Activated B cell treated with CpG ODN at 0.5 μM for 24 hours (primary cell): ENCODE measurements at regions of chrX and their contacts with region 1.

Region 1: DNA sequence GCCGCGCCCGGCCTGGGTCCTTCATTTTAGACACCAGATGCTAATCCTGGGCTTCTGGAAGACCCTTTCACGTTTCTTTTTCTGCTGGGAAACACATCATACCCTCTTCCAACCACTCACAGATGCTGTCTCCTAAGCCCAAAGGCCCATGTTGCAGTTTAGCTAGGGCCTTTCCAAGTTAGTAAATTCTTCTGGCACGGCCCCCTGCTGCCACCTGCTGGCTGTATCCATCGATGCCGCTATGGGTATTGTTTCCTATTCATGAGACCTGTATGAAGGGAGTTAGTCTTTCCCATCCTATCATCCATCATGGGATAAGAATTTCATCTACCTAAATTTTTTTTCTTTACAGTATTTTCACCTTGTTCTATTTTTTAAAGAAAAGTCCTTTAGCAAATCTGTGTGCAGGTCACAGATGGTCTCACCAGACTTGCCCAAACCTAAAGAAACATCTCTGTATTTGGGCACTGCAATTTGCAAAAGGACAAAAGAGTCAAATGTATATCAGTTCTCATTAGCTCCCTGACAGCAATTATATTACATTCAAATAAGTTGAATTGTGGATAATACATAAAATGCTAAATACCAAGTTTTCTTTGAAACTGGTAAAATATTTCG is 37.8 kb upstream of the SLC9A7 start:
- DNase-seq: peak; percentile 61
- ATAC-seq: peak; percentile 80
- H3K4me3 Mint-ChIP-seq: no peak overlapping the region
- H3K27ac Mint-ChIP-seq: no peak overlapping the region
- H3K4me1 Mint-ChIP-seq: peaks cover 20% of the 10 kb centered on the region
- H3K27me3 Mint-ChIP-seq: no peaks in the 10 kb centered on the region
- CTCF ChIP-seq: no peak

Region 2: GRCh38 chrX:46554942-46555341 is 241.7 kb before region 1 on chrX:
- CTCF ChIA-PET with region 1: interaction called, 26 read pairs
- POLR2A ChIA-PET with region 1: interaction called, 6 read pairs
- intact Hi-C with region 1: loop called (anchors 1 kb)
- DNase-seq: no peak
- ATAC-seq: no peak
- H3K4me3 Mint-ChIP-seq: no peak overlapping the region
- H3K27ac Mint-ChIP-seq: no peak overlapping the region
- H3K4me1 Mint-ChIP-seq: no peaks in the 10 kb centered on the region
- H3K27me3 Mint-ChIP-seq: peaks cover 6% of the 10 kb centered on the region
- CTCF ChIP-seq: no peak

Region 3: GRCh38 chrX:46653482-46653881 is 143.2 kb before region 1 on chrX:
- CTCF ChIA-PET with region 1: interaction called, 4 read pairs
- POLR2A ChIA-PET with region 1: no interaction called
- intact Hi-C with region 1: loop called (anchors 2 kb)
- DNase-seq: no peak
- ATAC-seq: no peak
- H3K4me3 Mint-ChIP-seq: no peak overlapping the region
- H3K27ac Mint-ChIP-seq: no peak overlapping the region
- H3K4me1 Mint-ChIP-seq: peaks cover 37% of the 10 kb centered on the region
- H3K27me3 Mint-ChIP-seq: no peaks in the 10 kb centered on the region
- CTCF ChIP-seq: no peak

Region 4: DNA sequence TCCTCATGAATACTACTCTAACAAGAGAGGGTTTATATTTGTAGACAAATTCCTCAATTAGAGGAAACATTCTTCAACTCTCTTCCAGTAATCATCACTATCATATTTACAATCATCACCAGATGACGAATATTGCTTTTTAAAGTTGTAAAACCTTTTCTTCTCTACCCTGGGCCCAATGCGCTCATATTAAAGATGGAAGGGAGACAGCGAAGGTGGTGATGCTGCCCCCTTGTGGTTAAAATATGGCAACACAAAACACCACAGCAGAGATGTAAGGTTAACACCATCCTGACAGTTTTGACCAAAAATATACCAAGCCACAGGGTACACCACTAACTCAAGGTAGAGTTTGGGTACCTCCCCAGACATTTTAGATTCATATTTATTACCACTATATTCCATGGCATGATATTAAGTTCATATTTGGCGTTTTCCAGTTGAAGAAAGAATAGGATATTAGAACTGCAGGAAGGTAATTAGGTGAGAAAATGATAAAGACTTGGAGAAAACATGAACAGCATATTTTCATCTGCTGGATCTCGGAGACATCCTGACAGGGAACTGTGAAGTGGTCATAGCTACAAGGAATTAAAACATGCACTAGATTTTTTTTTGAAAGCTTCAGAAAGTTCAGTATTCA is 110.6 kb before region 1 on chrX:
- CTCF ChIA-PET with region 1: interaction called, 5 read pairs
- POLR2A ChIA-PET with region 1: no interaction called
- intact Hi-C with region 1: loop called (anchors 1 kb)
- DNase-seq: no peak
- ATAC-seq: peak; percentile 65
- H3K4me3 Mint-ChIP-seq: no peak overlapping the region
- H3K27ac Mint-ChIP-seq: no peak overlapping the region
- H3K4me1 Mint-ChIP-seq: peaks cover 57% of the 10 kb centered on the region
- H3K27me3 Mint-ChIP-seq: no peaks in the 10 kb centered on the region
- CTCF ChIP-seq: no peak

Region 5: DNA sequence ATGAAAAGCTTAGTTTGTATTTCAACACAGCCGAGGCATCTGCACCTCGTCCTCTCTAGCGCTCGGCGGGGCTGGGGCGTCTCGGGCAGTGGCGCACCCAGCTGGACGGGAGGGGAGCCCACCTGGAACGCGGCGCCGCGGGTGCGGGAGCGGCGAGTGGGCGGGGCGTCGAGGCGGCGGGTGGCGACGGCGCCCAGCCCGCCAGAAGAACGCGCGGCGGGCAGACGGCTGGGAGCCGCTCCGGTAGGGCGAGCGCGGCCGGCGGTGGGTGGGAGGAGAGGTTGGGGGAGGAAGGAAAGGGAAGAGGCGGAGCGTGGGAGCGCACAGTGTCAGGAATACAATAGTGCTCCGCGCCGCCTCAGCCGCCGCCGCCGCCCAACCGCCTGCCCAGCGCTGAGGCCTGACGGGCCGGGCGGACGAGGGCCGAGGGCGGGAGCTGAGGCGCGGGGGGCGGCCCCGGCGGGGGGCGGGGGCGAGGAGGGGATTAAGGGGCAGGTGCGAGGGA is 115.5 kb after region 1 on chrX and contains the start of gene JADE3:
- CTCF ChIA-PET with region 1: no interaction called
- POLR2A ChIA-PET with region 1: no interaction called
- intact Hi-C with region 1: no loop called
- DNase-seq: peak; percentile 56
- ATAC-seq: peak; percentile 70
- H3K4me3 Mint-ChIP-seq: peak within 1 kb of the TSS; percentile 87
- H3K27ac Mint-ChIP-seq: no peak within 1 kb of the TSS
- H3K4me1 Mint-ChIP-seq: peaks cover 31% of the 10 kb centered on the region
- H3K27me3 Mint-ChIP-seq: no peaks in the 10 kb centered on the region
- CTCF ChIP-seq: no peak
- total RNA-seq, gene JADE3: 45.3 and 48.4 TPM in 2 replicates